HepG2 (cell line): ENCODE measurements at regions of chr19 and their contacts with region 1.

Region 1: GRCh38 chr19:14363183-14364097 is 17.8 kb upstream of the ADGRE5 start:
- DNase-seq: peak; percentile 25
- ATAC-seq: peak; percentile 75
- H3K4me3 ChIP-seq: peak overlapping the region in 2 of 3 experiments; percentile 28 to 55; a peak in 2 of 6 replicates
- H3K27ac ChIP-seq: no peak overlapping the region
- H3K4me1 ChIP-seq: peaks cover 21% of the 10 kb centered on the region
- H3K27me3 ChIP-seq: no peaks in the 10 kb centered on the region; a peak in 1 of 5 replicates
- CTCF ChIP-seq: no peak
- EP300 ChIP-seq: no peak
- POLR2A ChIP-seq: no peak
- RAD21 ChIP-seq: no peak

Region 2: DNA sequence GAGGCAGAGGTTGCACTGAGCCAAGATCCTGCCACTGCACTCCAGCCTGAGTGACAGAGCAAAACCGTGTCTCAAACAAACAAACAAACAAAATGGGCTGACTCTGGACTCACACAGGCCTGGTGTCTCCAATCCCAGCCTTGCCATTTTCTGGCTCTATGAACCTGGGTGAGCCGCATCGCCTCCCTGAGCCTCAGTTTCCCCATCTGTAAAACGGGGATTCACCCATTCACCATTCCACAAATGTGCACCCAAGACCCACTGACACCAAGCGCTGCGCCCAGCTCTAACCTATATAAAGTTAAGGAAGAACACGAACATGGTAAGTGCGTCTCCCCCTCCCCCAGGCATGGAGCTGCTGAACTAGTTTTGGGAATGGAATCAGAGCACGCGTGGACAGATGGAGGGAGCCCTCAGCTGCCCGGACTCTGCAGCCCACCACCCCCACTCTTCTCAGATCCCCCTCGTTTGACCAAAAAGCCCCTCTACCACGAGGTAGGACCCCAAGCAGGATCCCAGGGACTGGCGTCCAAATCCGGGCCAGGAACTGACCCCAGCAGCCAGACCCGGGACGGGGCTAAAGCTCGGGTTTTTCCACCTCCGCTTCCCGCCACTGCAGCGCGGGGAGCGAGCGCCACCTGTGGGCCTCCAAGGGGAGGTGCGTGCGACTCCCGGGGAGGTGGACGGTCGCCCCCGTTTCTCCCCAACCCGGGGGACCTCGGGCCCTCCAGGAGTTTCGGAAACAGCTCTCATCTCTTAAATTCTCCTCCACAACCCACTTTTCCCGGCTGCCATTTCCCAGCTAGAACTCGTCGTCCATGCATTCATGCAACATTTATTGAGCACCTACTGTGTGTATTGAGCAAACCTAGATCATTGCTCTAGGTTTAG is 15.2 kb before region 1 on chr19:
- CTCF ChIA-PET with region 1: no interaction called
- POLR2A ChIA-PET with region 1: no interaction called
- in situ Hi-C with region 1: no loop called
- intact Hi-C with region 1: no loop called
- DNase-seq: peak; percentile 28
- ATAC-seq: peak; percentile 72
- H3K4me3 ChIP-seq: peak overlapping the region in 1 of 3 experiments; percentile 51; a peak in 1 of 6 replicates
- H3K27ac ChIP-seq: no peak overlapping the region
- H3K4me1 ChIP-seq: peaks cover 32% of the 10 kb centered on the region
- H3K27me3 ChIP-seq: peaks cover 5 to 24% of the 10 kb centered on the region in 2 experiments; a peak in 4 of 5 replicates
- CTCF ChIP-seq: peak; percentile 92
- EP300 ChIP-seq: 0 out of 4 replicates have a peak, but pooled peaks of 1 of the 2 experiments have one; percentile 6
- POLR2A ChIP-seq: no peak
- RAD21 ChIP-seq: peak; percentile 90

Region 3: DNA sequence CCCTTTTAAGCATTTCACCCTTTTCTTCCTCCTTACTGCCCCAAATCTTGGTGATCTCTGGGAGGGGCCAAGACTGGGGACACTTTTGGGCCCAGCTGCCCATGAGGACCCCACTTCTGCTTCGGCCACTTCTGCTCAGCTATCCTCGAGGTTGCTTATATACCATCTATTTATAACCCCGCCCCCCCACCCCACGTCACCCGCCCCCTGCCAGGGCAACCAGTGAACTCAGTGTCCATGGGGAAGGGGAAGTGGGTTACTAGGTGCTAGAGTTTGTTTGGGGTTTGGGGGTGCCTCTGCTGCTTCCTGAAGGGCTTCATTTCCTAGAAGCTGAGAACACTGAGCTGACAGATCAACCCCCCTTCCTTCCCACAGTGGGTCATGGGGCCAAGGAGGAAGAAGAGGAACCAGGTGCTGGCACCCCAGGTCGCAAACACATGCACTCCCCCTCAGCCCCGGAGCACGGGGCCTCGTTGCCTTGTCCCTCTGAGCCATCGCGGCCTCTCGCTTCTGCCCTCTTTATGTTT is 11.7 kb after region 1 on chr19:
- CTCF ChIA-PET with region 1: no interaction called
- POLR2A ChIA-PET with region 1: no interaction called
- in situ Hi-C with region 1: no loop called
- intact Hi-C with region 1: no loop called
- DNase-seq: no peak
- ATAC-seq: no peak
- H3K4me3 ChIP-seq: no peak overlapping the region
- H3K27ac ChIP-seq: no peak overlapping the region
- H3K4me1 ChIP-seq: peaks cover 4% of the 10 kb centered on the region; the same call in 1 of the 2 replicates
- H3K27me3 ChIP-seq: peaks cover 2 to 11% of the 10 kb centered on the region in 2 experiments; a peak in 3 of 5 replicates
- CTCF ChIP-seq: no peak
- EP300 ChIP-seq: no peak
- POLR2A ChIP-seq: no peak
- RAD21 ChIP-seq: no peak

Region 4: GRCh38 chr19:14395710-14396336 is 32.4 kb after region 1 on chr19:
- CTCF ChIA-PET with region 1: no interaction called
- POLR2A ChIA-PET with region 1: no interaction called
- in situ Hi-C with region 1: no loop called
- intact Hi-C with region 1: no loop called
- DNase-seq: no peak
- ATAC-seq: no peak
- H3K4me3 ChIP-seq: no peak overlapping the region
- H3K27ac ChIP-seq: no peak overlapping the region
- H3K4me1 ChIP-seq: 0 out of 2 replicates have a peak, but pooled peaks cover 7% of the 10 kb centered on the region
- H3K27me3 ChIP-seq: peaks cover 0 to 1% of the 10 kb centered on the region in 2 experiments; a peak in 1 of 5 replicates
- CTCF ChIP-seq: no peak
- EP300 ChIP-seq: no peak
- POLR2A ChIP-seq: no peak
- RAD21 ChIP-seq: no peak

Region 5: GRCh38 chr19:14405758-14406644 is 42.6 kb after region 1 on chr19:
- CTCF ChIA-PET with region 1: no interaction called
- POLR2A ChIA-PET with region 1: no interaction called
- in situ Hi-C with region 1: loop called (anchors 5 kb)
- intact Hi-C with region 1: no loop called
- DNase-seq: peak; percentile 81
- ATAC-seq: peak; percentile 82
- H3K4me3 ChIP-seq: peak overlapping the region in 2 of 3 experiments; percentile 44 to 61; a peak in 3 of 6 replicates
- H3K27ac ChIP-seq: no peak overlapping the region
- H3K4me1 ChIP-seq: 0 out of 2 replicates have a peak, but pooled peaks cover 10% of the 10 kb centered on the region
- H3K27me3 ChIP-seq: no peaks in the 10 kb centered on the region
- CTCF ChIP-seq: peak; percentile 99
- EP300 ChIP-seq: no peak
- POLR2A ChIP-seq: no peak
- RAD21 ChIP-seq: peak; percentile 91